B cell (primary cell): ENCODE measurements at regions of chr17 and their contacts with region 1.

Region 1: DNA sequence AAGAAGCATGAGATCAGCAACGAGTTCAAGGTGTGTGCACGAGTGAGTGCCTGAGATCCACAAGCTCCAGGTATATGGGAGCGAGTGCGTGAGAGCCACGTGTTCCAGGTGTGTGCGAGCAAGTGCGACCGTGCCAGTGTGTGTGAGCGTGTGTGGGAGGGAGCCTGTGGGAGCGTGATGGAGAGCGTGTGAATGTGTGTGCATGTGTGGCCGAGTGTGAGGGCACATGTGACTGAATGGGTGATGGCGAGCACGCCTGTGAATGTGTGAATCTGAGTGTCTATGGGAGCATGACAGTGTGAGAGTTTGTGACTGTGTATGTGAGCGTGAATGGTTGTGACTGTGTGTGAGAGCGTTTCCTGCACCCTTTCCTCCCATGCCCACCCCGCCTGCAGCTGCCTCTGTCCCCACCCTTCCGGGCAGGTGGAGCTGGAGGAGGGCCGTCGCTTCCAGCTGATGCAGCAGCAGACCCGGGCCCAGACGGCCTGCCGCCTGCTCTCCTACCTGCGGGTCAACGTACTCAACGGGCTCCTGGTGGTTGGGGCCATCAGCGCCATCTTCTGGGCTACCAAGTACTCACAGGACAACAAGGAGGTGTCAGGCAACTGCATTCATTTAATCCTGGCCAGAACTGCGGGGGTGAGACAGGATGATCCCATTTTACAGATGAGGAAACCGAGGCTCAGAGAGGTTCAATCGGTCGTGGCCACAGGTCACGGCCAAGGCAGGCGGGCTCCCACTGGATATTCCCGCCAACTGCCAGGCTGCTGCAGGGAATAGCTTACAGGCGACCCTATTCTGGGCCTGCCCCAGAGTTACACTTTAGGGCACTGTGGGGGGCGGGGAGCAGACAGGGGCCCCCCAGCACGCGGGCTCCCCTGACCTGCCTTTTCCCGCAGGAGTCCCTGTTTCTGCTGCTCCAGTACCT is 3.7 kb downstream of the TMC8 start:
- DNase-seq: peak; percentile 90
- ATAC-seq: peak; percentile 7
- H3K4me3 ChIP-seq: peak overlapping the region in 3 of 5 experiments; percentile 6 to 35 (median 23)
- H3K4me3 Mint-ChIP-seq: peak overlapping the region; percentile 99
- H3K27ac ChIP-seq: peak overlapping the region; percentile 88 to 92
- H3K27ac Mint-ChIP-seq: peak overlapping the region; percentile 95
- H3K4me1 ChIP-seq: peaks cover 66 to 88% of the 10 kb centered on the region in 2 donors
- H3K4me1 Mint-ChIP-seq: peaks cover 79% of the 10 kb centered on the region
- H3K27me3 ChIP-seq: no peaks in the 10 kb centered on the region
- H3K27me3 Mint-ChIP-seq: no peaks in the 10 kb centered on the region
- CTCF ChIP-seq: peak; percentile 80

Region 2: DNA sequence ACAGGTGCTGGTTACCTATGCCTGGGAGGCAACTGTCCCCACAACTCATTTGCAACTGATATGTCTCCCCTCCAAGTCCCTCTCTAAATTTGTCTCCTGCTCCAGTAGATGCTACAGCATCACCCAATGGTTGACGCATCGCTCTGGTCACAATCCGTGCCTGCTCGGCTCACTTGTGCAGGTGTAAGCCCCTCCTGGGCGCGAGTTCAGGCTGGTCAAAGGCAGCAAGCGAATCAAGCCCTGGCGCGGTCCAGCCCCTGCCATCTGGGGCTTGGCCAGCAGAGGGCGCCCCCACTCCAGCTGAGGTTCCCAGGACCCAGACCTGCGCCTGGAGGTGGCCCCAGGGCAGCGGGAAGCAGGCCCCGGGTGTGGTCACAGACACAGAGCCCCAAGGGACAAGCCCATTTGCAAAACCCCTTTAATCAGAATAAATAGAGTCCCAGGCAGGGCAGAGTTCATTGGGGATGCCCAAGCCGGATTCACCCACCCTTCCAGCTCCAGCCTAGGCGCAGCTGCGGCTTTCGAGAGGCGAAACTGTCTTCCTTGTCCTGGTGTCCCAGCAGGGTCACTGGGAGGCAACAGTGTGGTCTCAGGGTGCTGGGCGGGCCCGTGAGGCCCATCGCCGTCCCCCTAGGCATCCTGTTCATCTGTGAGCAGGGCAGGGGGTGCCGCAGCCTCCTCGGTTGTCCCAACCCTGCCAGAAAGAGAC is 21.6 kb before region 1 on chr17:
- CTCF ChIA-PET with region 1: interaction called, 38 read pairs
- POLR2A ChIA-PET with region 1: interaction called, 5 read pairs
- intact Hi-C with region 1: loop called (anchors 1 kb)
- DNase-seq: peak; percentile 84
- ATAC-seq: peak; percentile 84
- H3K4me3 ChIP-seq: no peak overlapping the region
- H3K4me3 Mint-ChIP-seq: no peak overlapping the region
- H3K27ac ChIP-seq: peak overlapping the region in 1 of 2 donors; percentile 43
- H3K27ac Mint-ChIP-seq: peak overlapping the region; percentile 96
- H3K4me1 ChIP-seq: peaks cover 12 to 22% of the 10 kb centered on the region in 2 donors
- H3K4me1 Mint-ChIP-seq: peaks cover 24% of the 10 kb centered on the region
- H3K27me3 ChIP-seq: no peaks in the 10 kb centered on the region
- H3K27me3 Mint-ChIP-seq: no peaks in the 10 kb centered on the region
- CTCF ChIP-seq: peak; percentile 98

Region 3: DNA sequence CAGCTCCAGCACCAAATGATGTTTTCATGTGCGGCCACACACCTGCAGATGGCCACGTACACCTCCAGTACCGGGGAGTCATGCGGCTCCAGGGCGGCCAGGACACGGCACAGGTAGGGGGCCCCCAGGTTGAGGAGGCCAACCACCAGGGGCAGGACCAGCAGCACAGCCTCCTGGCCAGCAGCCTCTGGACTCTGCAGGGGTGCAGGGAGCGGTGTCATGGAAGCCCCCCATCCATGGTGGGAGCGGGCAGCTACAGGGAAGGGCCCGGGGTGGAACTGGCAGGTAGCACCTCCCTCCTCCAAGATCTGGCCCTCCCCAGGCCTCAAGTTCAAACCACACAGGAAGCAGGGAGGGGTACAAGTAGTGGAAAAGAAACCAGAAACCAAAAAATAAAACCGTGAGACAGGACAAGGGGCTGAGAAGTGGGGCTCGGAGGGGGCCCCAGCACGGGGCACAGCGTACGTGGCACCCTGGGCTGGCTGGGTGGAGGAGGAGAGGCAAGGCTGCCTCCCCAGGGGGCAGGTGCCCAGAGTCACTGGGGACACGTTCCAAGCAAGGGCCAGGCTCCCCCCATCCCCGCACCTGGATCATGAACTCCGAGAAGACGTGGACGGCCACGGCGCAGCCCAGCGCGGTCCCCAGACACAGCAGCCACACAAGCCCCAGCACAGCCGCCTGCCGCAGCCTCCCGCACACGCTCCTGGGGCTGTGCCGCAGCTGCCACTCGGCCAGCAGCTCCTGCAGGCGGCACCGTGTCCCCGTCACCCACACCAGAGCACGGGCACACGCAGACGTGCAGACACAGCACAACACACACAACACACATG is 13.0 kb before region 1 on chr17:
- CTCF ChIA-PET with region 1: interaction called, 25 read pairs
- POLR2A ChIA-PET with region 1: interaction called, 71 read pairs
- intact Hi-C with region 1: loop called (anchors 1 kb)
- DNase-seq: peak; percentile 50
- ATAC-seq: peak; percentile 6
- H3K4me3 ChIP-seq: peak overlapping the region in 3 of 5 experiments; percentile 7 to 25 (median 18)
- H3K4me3 Mint-ChIP-seq: peak overlapping the region; percentile 79
- H3K27ac ChIP-seq: peak overlapping the region; percentile 48 to 54
- H3K27ac Mint-ChIP-seq: peak overlapping the region; percentile 93
- H3K4me1 ChIP-seq: peaks cover 57% of the 10 kb centered on the region in 2 donors
- H3K4me1 Mint-ChIP-seq: peaks cover 57% of the 10 kb centered on the region
- H3K27me3 ChIP-seq: no peaks in the 10 kb centered on the region
- H3K27me3 Mint-ChIP-seq: no peaks in the 10 kb centered on the region
- CTCF ChIP-seq: no peak

Region 4: GRCh38 chr17:78147315-78147998 is 13.2 kb after region 1 on chr17:
- CTCF ChIA-PET with region 1: interaction called, 34 read pairs
- POLR2A ChIA-PET with region 1: interaction called, 71 read pairs
- intact Hi-C with region 1: loop called (anchors 2 kb)
- DNase-seq: peak; percentile 94
- ATAC-seq: peak; percentile 82
- H3K4me3 ChIP-seq: peak overlapping the region in 1 of 5 experiments; percentile 27
- H3K4me3 Mint-ChIP-seq: peak overlapping the region; percentile 79
- H3K27ac ChIP-seq: peak overlapping the region; percentile 97 to 98
- H3K27ac Mint-ChIP-seq: peak overlapping the region; percentile 95
- H3K4me1 ChIP-seq: peaks cover 69 to 90% of the 10 kb centered on the region in 2 donors
- H3K4me1 Mint-ChIP-seq: peaks cover 73% of the 10 kb centered on the region
- H3K27me3 ChIP-seq: no peaks in the 10 kb centered on the region
- H3K27me3 Mint-ChIP-seq: no peaks in the 10 kb centered on the region
- CTCF ChIP-seq: no peak

Region 5: GRCh38 chr17:78168242-78168902 is 34.1 kb after region 1 on chr17 and contains the start of gene SYNGR2:
- CTCF ChIA-PET with region 1: interaction called, 357 read pairs
- POLR2A ChIA-PET with region 1: interaction called, 432 read pairs
- intact Hi-C with region 1: loop called (anchors 2 kb)
- DNase-seq: peak; percentile 91
- ATAC-seq: peak; percentile 71
- H3K4me3 ChIP-seq: peak within 1 kb of the TSS; percentile 1 to 88 (median 74)
- H3K4me3 Mint-ChIP-seq: peak within 1 kb of the TSS; percentile 83
- H3K27ac ChIP-seq: peak within 1 kb of the TSS; percentile 93 to 97
- H3K27ac Mint-ChIP-seq: peak within 1 kb of the TSS; percentile 90
- H3K4me1 ChIP-seq: peaks cover 46 to 58% of the 10 kb centered on the region in 2 donors
- H3K4me1 Mint-ChIP-seq: peaks cover 51% of the 10 kb centered on the region
- H3K27me3 ChIP-seq: no peaks in the 10 kb centered on the region
- H3K27me3 Mint-ChIP-seq: no peaks in the 10 kb centered on the region
- CTCF ChIP-seq: no peak
- total RNA-seq, gene SYNGR2: 380 and 390 TPM in 2 replicates

Region 6: GRCh38 chr17:78341559-78342448 is 207.6 kb after region 1 on chr17:
- CTCF ChIA-PET with region 1: no interaction called
- POLR2A ChIA-PET with region 1: no interaction called
- intact Hi-C with region 1: loop called (anchors 5 kb)
- DNase-seq: peak; percentile 57
- ATAC-seq: no peak
- H3K4me3 ChIP-seq: peak overlapping the region in 4 of 5 experiments; percentile 26 to 58 (median 53)
- H3K4me3 Mint-ChIP-seq: peak overlapping the region; percentile 85
- H3K27ac ChIP-seq: peak overlapping the region; percentile 95
- H3K27ac Mint-ChIP-seq: peak overlapping the region; percentile 41
- H3K4me1 ChIP-seq: peaks cover 71 to 80% of the 10 kb centered on the region in 2 donors
- H3K4me1 Mint-ChIP-seq: peaks cover 76% of the 10 kb centered on the region
- H3K27me3 ChIP-seq: no peaks in the 10 kb centered on the region
- H3K27me3 Mint-ChIP-seq: no peaks in the 10 kb centered on the region
- CTCF ChIP-seq: no peak

Region 7: DNA sequence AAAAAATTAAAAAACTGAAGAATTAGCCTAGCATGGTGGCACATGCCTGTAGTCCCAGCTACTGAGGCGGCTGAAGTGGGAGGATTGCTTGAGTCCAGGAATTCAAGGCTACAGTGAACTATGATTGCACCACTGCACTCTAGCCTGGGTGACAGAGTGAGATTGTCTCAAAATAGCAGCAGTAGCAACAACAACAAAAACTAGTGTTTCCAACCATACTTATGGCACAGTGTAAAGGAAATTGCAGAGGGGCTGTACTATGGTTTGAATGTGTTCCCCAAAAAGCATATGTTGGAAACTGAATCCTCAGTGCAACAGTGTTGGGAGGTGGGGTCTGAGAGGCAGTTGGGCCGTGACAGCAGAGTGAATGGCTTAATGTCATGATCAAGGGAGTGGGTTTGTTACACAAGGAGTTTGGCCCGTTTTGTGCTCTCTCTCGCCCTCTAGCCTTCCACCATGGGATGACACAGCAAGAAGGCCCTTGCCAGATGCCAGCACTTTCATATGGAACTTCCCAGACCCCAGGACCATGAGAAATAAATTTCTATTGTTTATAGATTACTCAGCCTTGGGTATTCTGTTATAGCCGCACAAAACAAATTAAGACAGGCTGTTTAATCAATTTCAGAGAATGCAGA is 314.2 kb after region 1 on chr17:
- CTCF ChIA-PET with region 1: no interaction called
- POLR2A ChIA-PET with region 1: no interaction called
- intact Hi-C with region 1: no loop called
- DNase-seq: no peak
- ATAC-seq: no peak
- H3K4me3 ChIP-seq: no peak overlapping the region
- H3K4me3 Mint-ChIP-seq: no peak overlapping the region
- H3K27ac ChIP-seq: no peak overlapping the region
- H3K27ac Mint-ChIP-seq: no peak overlapping the region
- H3K4me1 ChIP-seq: peaks cover 0 to 3% of the 10 kb centered on the region in 2 donors
- H3K4me1 Mint-ChIP-seq: peaks cover 6% of the 10 kb centered on the region
- H3K27me3 ChIP-seq: no peaks in the 10 kb centered on the region
- H3K27me3 Mint-ChIP-seq: peaks cover 3% of the 10 kb centered on the region
- CTCF ChIP-seq: no peak